Activated CD4-positive, alpha-beta memory T cell treated with anti-CD3 and anti-CD28 coated beads for 36 hours (primary cell): ENCODE measurements at regions of chr12 and their contacts with region 1.

Region 1: GRCh38 chr12:109093022-109093918 is at the start of gene ALKBH2:
- DNase-seq: peak; percentile 97
- H3K4me3 Mint-ChIP-seq: peak within 1 kb of the TSS; percentile 71
- H3K27ac Mint-ChIP-seq: peak within 1 kb of the TSS; percentile 81
- H3K4me1 Mint-ChIP-seq: peaks cover 34% of the 10 kb centered on the region
- H3K27me3 Mint-ChIP-seq: no peaks in the 10 kb centered on the region
- total RNA-seq, gene ALKBH2: 23.9 to 28.6 TPM

Region 2: DNA sequence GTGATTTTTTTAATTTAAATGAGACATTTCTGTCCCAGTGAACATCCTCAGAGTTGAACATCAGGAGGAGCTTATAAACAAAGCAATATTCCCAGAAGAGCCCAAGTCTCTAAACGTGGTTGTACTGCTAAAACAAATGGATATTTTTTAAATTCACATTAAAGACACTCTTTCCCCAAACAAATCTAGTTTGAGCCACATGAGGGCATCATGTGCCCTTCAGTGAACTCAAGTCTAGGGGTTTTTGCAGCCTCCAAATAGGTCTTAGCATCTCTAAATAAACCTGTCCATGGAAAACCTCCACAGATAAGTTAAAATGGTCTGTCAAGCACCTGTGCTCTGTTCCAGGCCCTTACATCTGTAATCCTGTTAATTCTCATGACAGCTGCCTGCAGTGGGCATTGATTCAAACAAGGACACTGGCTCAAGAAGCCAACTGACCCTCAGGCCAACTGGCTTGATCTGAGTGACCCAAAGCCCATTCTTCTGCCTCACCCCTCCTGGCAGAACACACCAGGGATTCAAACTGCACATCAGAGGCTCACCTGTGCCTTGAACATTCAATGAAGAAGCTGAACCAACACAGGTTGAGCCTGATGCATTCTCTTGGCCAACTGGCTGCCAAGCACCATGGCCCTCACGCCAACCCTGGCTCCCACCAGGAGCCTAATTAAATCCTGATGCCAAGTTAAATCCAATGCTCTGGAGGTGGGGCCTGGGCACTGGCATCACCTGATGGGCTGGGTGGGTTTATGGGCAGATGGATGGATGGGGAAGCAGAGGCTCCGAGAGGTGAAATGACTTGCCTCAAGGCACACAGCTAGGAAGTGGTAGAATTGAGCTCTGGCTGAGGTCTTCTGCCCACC is 522.3 kb before region 1 on chr12:
- CTCF ChIA-PET with region 1: no interaction called
- POLR2A ChIA-PET with region 1: no interaction called
- intact Hi-C with region 1: loop called (anchors 2 kb)
- DNase-seq: peak; percentile 18
- H3K4me3 Mint-ChIP-seq: no peak overlapping the region
- H3K27ac Mint-ChIP-seq: no peak overlapping the region
- H3K4me1 Mint-ChIP-seq: peaks cover 76% of the 10 kb centered on the region
- H3K27me3 Mint-ChIP-seq: no peaks in the 10 kb centered on the region

Region 3: GRCh38 chr12:108731105-108731865 is 362.0 kb before region 1 on chr12 and contains the start of gene CORO1C:
- CTCF ChIA-PET with region 1: no interaction called
- POLR2A ChIA-PET with region 1: no interaction called
- intact Hi-C with region 1: loop called (anchors 2 kb)
- DNase-seq: peak; percentile 97
- H3K4me3 Mint-ChIP-seq: peak within 1 kb of the TSS; percentile 91
- H3K27ac Mint-ChIP-seq: peak within 1 kb of the TSS; percentile 91
- H3K4me1 Mint-ChIP-seq: peaks cover 34% of the 10 kb centered on the region
- H3K27me3 Mint-ChIP-seq: no peaks in the 10 kb centered on the region
- total RNA-seq, gene CORO1C: 62.1 to 70.9 TPM

Region 4: GRCh38 chr12:108856428-108857157 is 236.7 kb before region 1 on chr12:
- CTCF ChIA-PET with region 1: no interaction called
- POLR2A ChIA-PET with region 1: interaction called, 6 read pairs
- intact Hi-C with region 1: loop called (anchors 1 kb)
- DNase-seq: peak; percentile 82
- H3K4me3 Mint-ChIP-seq: peak overlapping the region; percentile 97
- H3K27ac Mint-ChIP-seq: peak overlapping the region; percentile 92
- H3K4me1 Mint-ChIP-seq: peaks cover 53% of the 10 kb centered on the region
- H3K27me3 Mint-ChIP-seq: peaks cover 2% of the 10 kb centered on the region

Region 5: GRCh38 chr12:109052414-109053323 is 40.6 kb before region 1 on chr12 and contains the start of gene USP30:
- CTCF ChIA-PET with region 1: interaction called, 7 read pairs
- POLR2A ChIA-PET with region 1: interaction called, 4 read pairs
- intact Hi-C with region 1: loop called (anchors 1 kb)
- DNase-seq: peak; percentile 89
- H3K4me3 Mint-ChIP-seq: peak within 1 kb of the TSS; percentile 89
- H3K27ac Mint-ChIP-seq: peak within 1 kb of the TSS; percentile 97
- H3K4me1 Mint-ChIP-seq: peaks cover 15% of the 10 kb centered on the region
- H3K27me3 Mint-ChIP-seq: no peaks in the 10 kb centered on the region
- total RNA-seq, gene USP30: 11.4 to 11.8 TPM

Region 6: DNA sequence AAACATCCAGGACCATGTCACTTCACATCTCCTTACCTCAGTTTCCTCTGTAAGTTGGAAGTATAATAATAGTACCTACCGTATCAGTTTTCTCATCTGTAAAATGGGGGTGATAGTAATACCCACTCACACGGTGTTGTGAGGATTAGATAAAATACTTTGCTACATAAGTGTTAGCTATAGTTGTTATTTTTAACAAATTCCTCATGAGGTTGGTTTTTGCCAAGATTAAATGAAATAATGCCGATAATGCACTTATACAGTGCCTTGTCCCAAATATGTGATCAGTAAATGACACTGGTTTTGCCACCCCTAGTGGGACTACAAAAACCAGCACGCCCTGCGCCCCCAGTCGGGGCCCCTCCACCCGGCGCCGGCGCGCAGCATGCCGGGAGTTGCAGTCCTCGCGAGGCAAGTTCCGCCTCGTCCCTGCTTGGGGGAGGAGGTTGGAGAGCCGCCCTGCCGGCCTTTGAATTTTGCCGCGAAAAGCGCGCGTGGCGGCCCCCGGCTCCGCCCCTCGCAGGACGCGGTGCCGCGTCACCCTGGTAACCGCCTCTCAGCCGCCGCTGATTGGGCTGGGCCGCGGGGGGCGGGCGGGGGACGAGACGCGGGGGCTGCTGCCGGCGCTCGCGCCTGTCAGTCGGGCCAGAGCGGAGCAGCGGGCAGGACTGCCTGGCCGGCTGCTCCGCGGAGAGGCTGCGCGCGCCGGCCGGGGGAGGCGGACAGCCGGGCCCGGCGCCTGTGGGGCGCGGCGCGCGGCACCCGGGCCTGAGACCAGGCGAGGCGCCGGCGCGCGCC is 620.1 kb after region 1 on chr12 and contains the start of gene FAM222A:
- CTCF ChIA-PET with region 1: no interaction called
- POLR2A ChIA-PET with region 1: no interaction called
- intact Hi-C with region 1: no loop called
- DNase-seq: peak; percentile 96
- H3K4me3 Mint-ChIP-seq: peak within 1 kb of the TSS; percentile 59
- H3K27ac Mint-ChIP-seq: no peak within 1 kb of the TSS
- H3K4me1 Mint-ChIP-seq: no peaks in the 10 kb centered on the region
- H3K27me3 Mint-ChIP-seq: peaks cover 31% of the 10 kb centered on the region
- total RNA-seq, gene FAM222A: 0.29 to 0.55 TPM